PC-3 (cell line): ENCODE measurements at regions of chr2 and their contacts with region 1.

Region 1: DNA sequence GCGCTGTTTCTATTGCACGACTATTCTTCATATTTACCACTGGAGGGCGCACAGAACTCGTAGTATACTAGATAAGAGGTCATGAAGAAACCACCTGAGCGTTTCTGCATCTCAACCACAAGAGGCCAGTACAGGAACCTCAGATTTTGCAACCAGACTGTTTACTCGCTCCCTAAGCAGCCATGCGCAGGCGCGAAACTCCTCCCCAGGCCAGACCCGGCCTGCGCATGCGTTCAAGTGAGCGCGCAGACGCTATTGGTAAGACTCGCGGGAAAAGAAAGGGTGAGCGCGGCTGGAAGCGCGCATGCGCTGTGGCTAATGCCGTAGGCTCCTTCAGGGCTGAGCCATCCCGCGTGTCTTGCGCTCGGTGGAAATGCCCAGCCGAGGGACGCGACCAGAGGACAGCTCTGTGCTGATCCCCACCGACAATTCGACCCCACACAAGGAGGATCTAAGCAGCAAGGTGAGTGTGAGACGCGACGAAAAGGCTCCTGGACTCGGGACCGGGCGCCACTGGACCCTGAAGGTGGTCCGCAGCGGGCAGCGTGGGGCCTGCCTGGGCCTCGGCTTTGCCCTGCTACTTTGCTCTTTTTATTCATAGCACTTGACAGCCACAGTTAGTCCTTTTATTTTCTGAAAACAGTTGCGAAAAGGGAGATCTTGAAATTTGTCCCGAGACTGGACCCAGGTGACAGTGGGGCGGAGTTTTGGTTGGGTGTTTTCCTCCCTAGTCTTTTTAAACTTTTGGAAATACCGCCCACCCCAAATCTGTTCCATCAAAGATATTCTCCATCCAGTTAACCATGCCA is at the start of gene ASNSD1:
- DNase-seq: peak; percentile 99
- ATAC-seq: peak; percentile 89
- H3K4me3 ChIP-seq: peak within 1 kb of the TSS; percentile 90
- H3K27ac ChIP-seq: no peak within 1 kb of the TSS; the same call in 1 of the 2 replicates
- H3K4me1 ChIP-seq: peaks cover 30% of the 10 kb centered on the region
- H3K27me3 ChIP-seq: no peaks in the 10 kb centered on the region
- CTCF ChIP-seq: peak; percentile 98
- total RNA-seq, gene ASNSD1: 33.7 and 48.3 TPM in 2 replicates

Region 2: GRCh38 chr2:189179570-189179950 is 481.8 kb before region 1 on chr2 and contains the start of gene COL5A2:
- CTCF ChIA-PET with region 1: no interaction called
- POLR2A ChIA-PET with region 1: no interaction called
- intact Hi-C with region 1: no loop called
- DNase-seq: no peak
- ATAC-seq: no peak
- H3K4me3 ChIP-seq: no peak within 1 kb of the TSS
- H3K27ac ChIP-seq: no peak within 1 kb of the TSS
- H3K4me1 ChIP-seq: peaks cover 4% of the 10 kb centered on the region; the same call in 1 of the 2 replicates
- H3K27me3 ChIP-seq: no peaks in the 10 kb centered on the region
- CTCF ChIP-seq: no peak
- total RNA-seq, gene COL5A2: 56.2 and 60.1 TPM in 2 replicates

Region 3: GRCh38 chr2:189466660-189467059 is 194.7 kb before region 1 on chr2:
- CTCF ChIA-PET with region 1: no interaction called
- POLR2A ChIA-PET with region 1: no interaction called
- intact Hi-C with region 1: loop called (anchors 1 kb)
- DNase-seq: peak; percentile 51
- ATAC-seq: 0 out of 2 replicates have a peak, but pooled peaks have one; percentile 40
- H3K4me3 ChIP-seq: no peak overlapping the region
- H3K27ac ChIP-seq: no peak overlapping the region
- H3K4me1 ChIP-seq: no peaks in the 10 kb centered on the region
- H3K27me3 ChIP-seq: no peaks in the 10 kb centered on the region
- CTCF ChIP-seq: peak; percentile 81

Region 4: GRCh38 chr2:189599245-189599644 is 62.1 kb before region 1 on chr2:
- CTCF ChIA-PET with region 1: no interaction called
- POLR2A ChIA-PET with region 1: no interaction called
- intact Hi-C with region 1: no loop called
- DNase-seq: no peak
- ATAC-seq: no peak
- H3K4me3 ChIP-seq: no peak overlapping the region
- H3K27ac ChIP-seq: no peak overlapping the region
- H3K4me1 ChIP-seq: no peaks in the 10 kb centered on the region
- H3K27me3 ChIP-seq: no peaks in the 10 kb centered on the region
- CTCF ChIP-seq: no peak

Region 5: GRCh38 chr2:189609423-189609816 is 51.9 kb before region 1 on chr2:
- CTCF ChIA-PET with region 1: no interaction called
- POLR2A ChIA-PET with region 1: no interaction called
- intact Hi-C with region 1: no loop called
- DNase-seq: peak; percentile 40
- ATAC-seq: peak; percentile 72
- H3K4me3 ChIP-seq: no peak overlapping the region
- H3K27ac ChIP-seq: peak overlapping the region; percentile 26
- H3K4me1 ChIP-seq: peaks cover 25% of the 10 kb centered on the region
- H3K27me3 ChIP-seq: no peaks in the 10 kb centered on the region
- CTCF ChIP-seq: no peak

Region 6: DNA sequence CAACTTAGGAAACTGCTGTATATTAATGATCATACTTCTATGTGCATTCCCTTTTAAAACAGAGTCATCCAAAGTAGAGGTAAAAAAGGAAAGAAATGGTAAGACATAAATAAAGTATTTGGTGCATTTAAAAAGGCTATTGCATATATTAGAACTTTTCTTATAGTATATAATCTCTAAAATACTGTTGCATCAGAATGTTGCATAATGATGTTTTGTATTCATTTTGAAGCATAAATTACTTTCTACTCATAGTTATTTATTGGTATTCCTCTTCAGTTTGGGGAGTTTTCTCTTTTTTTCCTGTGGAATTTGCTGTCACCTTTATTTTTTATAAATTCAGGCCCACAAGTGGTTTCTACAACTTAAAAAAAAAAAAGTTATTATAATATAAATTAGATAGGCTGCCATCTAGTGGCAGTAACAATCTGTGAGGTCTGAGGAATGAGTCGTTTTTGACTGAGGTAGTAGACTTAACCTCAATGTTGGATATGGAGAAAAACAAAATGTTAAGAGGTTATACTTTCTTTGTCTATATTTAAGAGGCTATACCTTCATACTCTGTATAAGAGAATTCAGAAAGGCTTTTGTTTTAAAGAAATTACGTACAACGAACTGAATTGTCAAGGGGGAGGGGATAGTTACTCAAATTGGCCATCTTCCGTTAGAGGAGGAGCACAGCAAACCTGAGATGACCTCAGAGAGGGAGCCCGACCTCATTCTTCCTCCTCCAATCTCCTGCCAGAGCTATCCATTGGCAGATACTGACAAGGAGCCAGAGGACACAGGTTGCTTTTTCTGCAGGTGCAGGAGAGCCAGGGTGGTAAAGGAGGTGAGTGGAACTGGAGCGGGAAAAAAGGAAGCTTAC is 36.9 kb after region 1 on chr2:
- CTCF ChIA-PET with region 1: interaction called, 8 read pairs
- POLR2A ChIA-PET with region 1: no interaction called
- intact Hi-C with region 1: loop called (anchors 1 kb)
- DNase-seq: peak; percentile 68
- ATAC-seq: peak; percentile 57; the same call in 1 of the 2 replicates
- H3K4me3 ChIP-seq: no peak overlapping the region
- H3K27ac ChIP-seq: no peak overlapping the region
- H3K4me1 ChIP-seq: no peaks in the 10 kb centered on the region
- H3K27me3 ChIP-seq: no peaks in the 10 kb centered on the region
- CTCF ChIP-seq: peak; percentile 56

Region 7: GRCh38 chr2:189783927-189784867 is 122.8 kb after region 1 on chr2 and contains the starts of genes ORMDL1 and PMS1:
- CTCF ChIA-PET with region 1: no interaction called
- POLR2A ChIA-PET with region 1: no interaction called
- intact Hi-C with region 1: loop called (anchors 5 kb)
- DNase-seq: peak; percentile 96
- ATAC-seq: peak; percentile 92
- H3K4me3 ChIP-seq: peak within 1 kb of the TSS; percentile 80
- H3K27ac ChIP-seq: peak within 1 kb of the TSS; percentile 71
- H3K4me1 ChIP-seq: peaks cover 19% of the 10 kb centered on the region
- H3K27me3 ChIP-seq: no peaks in the 10 kb centered on the region
- CTCF ChIP-seq: no peak
- total RNA-seq, gene ORMDL1: 44.6 and 64.5 TPM in 2 replicates
- total RNA-seq, gene PMS1: 13.8 and 15.1 TPM in 2 replicates

Region 8: GRCh38 chr2:190069936-190070696 is 408.8 kb after region 1 on chr2:
- CTCF ChIA-PET with region 1: no interaction called
- POLR2A ChIA-PET with region 1: no interaction called
- intact Hi-C with region 1: loop called (anchors 1 kb)
- DNase-seq: peak; percentile 82
- ATAC-seq: no peak
- H3K4me3 ChIP-seq: no peak overlapping the region
- H3K27ac ChIP-seq: no peak overlapping the region
- H3K4me1 ChIP-seq: no peaks in the 10 kb centered on the region
- H3K27me3 ChIP-seq: no peaks in the 10 kb centered on the region
- CTCF ChIP-seq: peak; percentile 72